ENCODE measurements at regions of chr2 and their contacts with region 1.

Region 1: DNA sequence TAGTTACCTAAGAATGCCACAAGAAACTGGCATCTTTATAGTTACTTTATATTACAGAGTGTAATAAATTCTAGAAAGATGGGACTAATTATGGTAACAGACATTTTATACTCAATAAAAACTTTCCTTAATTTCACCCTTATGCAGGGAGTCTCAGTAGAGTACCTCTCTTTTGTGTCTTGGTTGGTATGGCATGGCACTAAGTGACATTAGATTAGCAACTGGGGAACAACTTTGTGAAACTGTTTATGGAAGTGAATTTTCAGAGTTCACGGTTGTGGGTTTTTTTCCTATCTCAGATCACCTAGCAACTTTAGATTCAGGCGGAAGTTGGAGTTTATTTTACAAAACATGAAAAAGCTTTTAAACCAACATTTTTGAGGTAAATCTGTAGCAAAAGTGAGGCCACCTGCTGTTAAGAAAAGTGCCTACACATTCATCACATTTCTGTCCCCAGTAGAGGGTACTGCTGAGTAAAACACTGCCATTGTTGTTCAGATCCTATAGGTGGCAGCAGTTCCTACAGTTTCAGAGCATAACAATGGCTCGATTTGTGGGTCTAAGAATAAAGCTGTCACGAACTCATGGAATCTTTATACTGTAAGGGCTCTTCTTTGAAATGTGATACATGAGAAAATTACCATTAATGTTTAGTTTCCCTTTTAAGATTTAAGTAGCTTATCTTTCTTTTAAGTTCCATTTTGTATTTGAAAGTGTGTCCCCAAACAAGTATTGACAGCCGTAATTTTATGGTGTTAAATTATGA is 117.6 kb downstream of the CAMKMT start:
- DNase-seq: peak; percentile 64
- ATAC-seq: peak; percentile 100
- H3K4me3 Mint-ChIP-seq: no peak overlapping the region
- H3K27ac Mint-ChIP-seq: no peak overlapping the region
- H3K4me1 Mint-ChIP-seq: peaks cover 3% of the 10 kb centered on the region
- H3K27me3 Mint-ChIP-seq: no peaks in the 10 kb centered on the region

Region 2: GRCh38 chr2:44087036-44087713 is 392.1 kb before region 1 on chr2:
- CTCF ChIA-PET with region 1: interaction called, 16 read pairs
- POLR2A ChIA-PET with region 1: no interaction called
- DNase-seq: peak; percentile 88
- ATAC-seq: peak; percentile 90
- H3K4me3 Mint-ChIP-seq: peak overlapping the region; percentile 77
- H3K27ac Mint-ChIP-seq: peak overlapping the region; percentile 84
- H3K4me1 Mint-ChIP-seq: peaks cover 28% of the 10 kb centered on the region
- H3K27me3 Mint-ChIP-seq: no peaks in the 10 kb centered on the region

Region 3: GRCh38 chr2:44267796-44268648 is 211.3 kb before region 1 on chr2:
- CTCF ChIA-PET with region 1: no interaction called
- POLR2A ChIA-PET with region 1: no interaction called
- DNase-seq: no peak
- ATAC-seq: no peak
- H3K4me3 Mint-ChIP-seq: no peak overlapping the region
- H3K27ac Mint-ChIP-seq: no peak overlapping the region
- H3K4me1 Mint-ChIP-seq: no peaks in the 10 kb centered on the region
- H3K27me3 Mint-ChIP-seq: no peaks in the 10 kb centered on the region

Region 4: DNA sequence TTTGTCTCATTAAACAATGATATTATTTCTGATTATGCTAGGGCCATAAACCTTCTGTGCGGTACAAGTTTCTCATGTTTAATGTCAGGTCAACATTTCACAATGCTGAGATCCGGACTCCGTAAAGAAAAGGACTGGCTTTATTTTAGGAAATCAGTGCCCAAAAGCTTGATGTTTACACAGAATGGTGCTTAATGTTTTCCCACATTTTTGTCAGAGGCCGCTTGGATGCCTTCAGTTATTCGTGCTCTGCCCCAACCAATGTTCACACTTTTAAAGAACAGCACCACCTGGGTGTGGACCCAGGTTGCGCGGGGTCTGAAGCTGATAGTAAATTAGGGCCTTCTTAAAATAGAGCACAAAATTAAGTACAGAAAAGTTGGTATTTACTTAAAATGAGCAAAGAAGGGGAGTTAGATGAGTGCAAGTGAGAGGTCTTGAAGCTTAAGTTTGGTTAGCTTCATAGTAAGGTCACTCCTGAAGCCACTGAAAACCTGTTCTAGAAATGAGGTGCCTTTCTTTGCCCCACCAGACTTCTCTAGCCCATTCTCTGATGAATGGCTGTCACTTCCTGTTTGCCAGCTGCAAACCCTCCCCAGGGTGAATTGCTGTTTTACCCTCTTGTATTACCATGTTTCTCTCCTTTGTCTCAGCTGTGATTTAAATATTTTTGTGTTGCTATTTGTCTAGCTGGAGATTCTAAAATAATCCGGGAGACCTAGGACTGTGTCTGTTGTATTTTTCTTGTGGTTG is 183.5 kb before region 1 on chr2:
- CTCF ChIA-PET with region 1: no interaction called
- POLR2A ChIA-PET with region 1: no interaction called
- DNase-seq: no peak
- ATAC-seq: no peak
- H3K4me3 Mint-ChIP-seq: no peak overlapping the region
- H3K27ac Mint-ChIP-seq: no peak overlapping the region
- H3K4me1 Mint-ChIP-seq: peaks cover 10% of the 10 kb centered on the region
- H3K27me3 Mint-ChIP-seq: peaks cover 9% of the 10 kb centered on the region

Region 5: GRCh38 chr2:44441200-44441599 is 38.1 kb before region 1 on chr2:
- CTCF ChIA-PET with region 1: interaction called, 13 read pairs
- POLR2A ChIA-PET with region 1: no interaction called
- DNase-seq: no peak
- ATAC-seq: no peak
- H3K4me3 Mint-ChIP-seq: no peak overlapping the region
- H3K27ac Mint-ChIP-seq: no peak overlapping the region
- H3K4me1 Mint-ChIP-seq: no peaks in the 10 kb centered on the region
- H3K27me3 Mint-ChIP-seq: no peaks in the 10 kb centered on the region

Region 6: GRCh38 chr2:44490726-44491125 is 11.4 kb after region 1 on chr2:
- CTCF ChIA-PET with region 1: interaction called, 18 read pairs
- POLR2A ChIA-PET with region 1: no interaction called
- DNase-seq: no peak
- ATAC-seq: no peak
- H3K4me3 Mint-ChIP-seq: no peak overlapping the region
- H3K27ac Mint-ChIP-seq: no peak overlapping the region
- H3K4me1 Mint-ChIP-seq: no peaks in the 10 kb centered on the region
- H3K27me3 Mint-ChIP-seq: no peaks in the 10 kb centered on the region

Region 7: DNA sequence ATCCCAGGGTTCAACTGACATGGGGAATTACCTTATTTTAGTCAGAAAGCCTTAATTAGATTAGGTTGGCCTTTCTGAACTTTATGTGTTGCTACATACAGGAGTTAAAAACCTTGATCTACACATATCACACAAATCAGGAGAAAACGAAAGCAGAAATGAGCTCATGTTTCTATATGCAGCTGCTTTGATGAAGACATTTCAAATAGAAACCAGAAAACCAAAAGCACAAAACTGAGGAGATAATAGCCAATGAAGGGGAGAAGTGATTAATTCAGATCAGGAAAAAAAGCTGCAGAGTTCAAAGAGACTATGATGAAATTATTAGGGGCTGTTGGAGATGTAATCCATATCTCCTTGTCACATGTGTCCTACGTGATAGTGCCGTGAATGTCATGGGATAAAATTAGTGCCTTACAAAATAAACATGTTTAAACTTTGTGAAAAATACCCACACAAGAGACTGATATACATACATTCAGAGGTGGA is 137.4 kb after region 1 on chr2:
- CTCF ChIA-PET with region 1: interaction called, 13 read pairs
- POLR2A ChIA-PET with region 1: no interaction called
- DNase-seq: no peak
- ATAC-seq: peak; percentile 89
- H3K4me3 Mint-ChIP-seq: no peak overlapping the region
- H3K27ac Mint-ChIP-seq: no peak overlapping the region
- H3K4me1 Mint-ChIP-seq: peaks cover 3% of the 10 kb centered on the region
- H3K27me3 Mint-ChIP-seq: no peaks in the 10 kb centered on the region

Region 8: DNA sequence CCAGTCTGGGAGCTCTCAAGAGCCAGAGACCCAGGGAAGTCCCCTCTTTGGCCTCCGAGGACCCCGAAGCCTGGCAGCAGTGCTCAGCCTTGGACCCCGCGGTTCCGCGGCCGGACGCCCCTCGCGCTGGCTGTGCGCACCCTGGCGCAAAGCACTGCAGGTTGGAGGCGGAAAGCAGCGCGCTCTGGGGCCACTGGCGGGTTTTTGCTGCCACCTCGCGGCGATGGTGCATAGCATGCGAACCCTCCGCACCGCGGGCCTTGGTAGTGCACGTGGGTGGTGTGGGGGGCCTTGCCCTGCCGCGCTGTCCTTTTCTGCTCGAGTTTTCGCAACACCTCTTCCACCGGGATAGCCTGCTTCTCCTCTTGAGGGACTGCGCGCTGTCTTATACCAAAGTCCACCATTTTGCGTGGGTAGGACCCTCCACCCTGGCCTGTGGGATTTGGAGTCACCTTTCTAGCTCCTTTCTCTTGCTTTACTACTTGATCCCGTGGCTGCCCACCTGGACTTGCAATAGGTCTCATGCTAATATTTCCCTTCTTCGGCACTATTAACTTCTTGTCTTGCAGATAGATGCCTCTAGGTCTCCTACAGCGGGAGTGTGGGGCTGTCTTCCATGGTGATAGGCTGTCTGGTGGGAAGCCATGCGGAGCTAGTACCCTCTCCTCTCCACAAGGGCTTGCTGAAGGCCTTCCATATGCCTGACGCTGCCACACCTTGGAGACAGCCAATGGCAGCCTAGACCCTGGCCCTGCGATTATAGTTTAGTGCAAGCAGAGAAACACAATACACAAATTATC is 476.5 kb after region 1 on chr2:
- CTCF ChIA-PET with region 1: interaction called, 76 read pairs
- POLR2A ChIA-PET with region 1: no interaction called
- DNase-seq: peak; percentile 81
- ATAC-seq: peak; percentile 86
- H3K4me3 Mint-ChIP-seq: peak overlapping the region; percentile 9
- H3K27ac Mint-ChIP-seq: no peak overlapping the region
- H3K4me1 Mint-ChIP-seq: peaks cover 22% of the 10 kb centered on the region
- H3K27me3 Mint-ChIP-seq: peaks cover 59% of the 10 kb centered on the region

Measured in activated CD8-positive, alpha-beta T cell treated with anti-CD3 and anti-CD28 coated beads, Interleukin-2, amount 10 ng/mL, durations not matched to agents 7 days and 5 days (primary cell).